Activated CD4-positive, alpha-beta T cell treated with anti-CD3 and anti-CD28 coated beads, Interleukin-2, amount 10 ng/mL, durations not matched to agents 24 days and 14 days (primary cell): ENCODE measurements at regions of chr10 and their contacts with region 1.

Region 1: GRCh38 chr10:30027057-30028005 is 32.1 kb downstream of the JCAD start:
- DNase-seq: peak; percentile 98
- H3K4me3 Mint-ChIP-seq: peak overlapping the region; percentile 83
- H3K27ac Mint-ChIP-seq: peak overlapping the region; percentile 86
- H3K4me1 Mint-ChIP-seq: peaks cover 43% of the 10 kb centered on the region
- H3K27me3 Mint-ChIP-seq: peaks cover 20% of the 10 kb centered on the region

Region 2: GRCh38 chr10:29658984-29659965 is 368.1 kb before region 1 on chr10:
- intact Hi-C with region 1: loop called (anchors 1 kb)
- DNase-seq: peak; percentile 89
- H3K4me3 Mint-ChIP-seq: peak overlapping the region; percentile 56
- H3K27ac Mint-ChIP-seq: peak overlapping the region; percentile 67
- H3K4me1 Mint-ChIP-seq: peaks cover 18% of the 10 kb centered on the region
- H3K27me3 Mint-ChIP-seq: peaks cover 46% of the 10 kb centered on the region

Region 3: DNA sequence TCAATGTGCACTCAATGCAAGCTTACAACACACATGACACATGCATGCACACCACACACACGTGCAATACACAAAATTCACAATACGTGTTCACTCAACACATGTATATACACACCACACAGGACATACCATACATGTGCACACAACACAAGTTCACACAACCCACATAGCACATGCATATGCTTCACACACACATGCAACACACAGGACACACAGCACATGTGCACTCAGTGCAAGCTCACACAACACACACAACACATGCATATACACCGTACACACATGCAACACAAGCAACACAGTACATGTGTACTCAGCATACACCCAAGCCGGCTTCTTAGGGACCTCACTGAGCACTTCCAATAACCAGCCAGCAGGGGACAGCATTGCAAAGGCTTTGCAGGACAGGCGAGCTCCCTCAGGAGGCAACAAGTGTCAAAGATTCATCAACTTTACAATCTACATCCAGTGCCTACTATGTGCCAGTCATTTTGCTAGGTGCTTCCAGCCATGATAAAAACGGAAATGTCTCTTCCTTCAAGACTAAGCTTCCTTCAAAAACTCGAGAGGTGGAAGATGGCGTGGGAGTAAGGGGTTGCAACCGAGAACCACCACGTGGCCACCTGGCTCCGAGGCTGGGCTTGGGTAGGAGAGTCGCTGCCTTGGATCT is 29.1 kb before region 1 on chr10:
- intact Hi-C with region 1: loop called (anchors 1 kb)
- DNase-seq: peak; percentile 94
- H3K4me3 Mint-ChIP-seq: no peak overlapping the region
- H3K27ac Mint-ChIP-seq: peak overlapping the region; percentile 20
- H3K4me1 Mint-ChIP-seq: peaks cover 8% of the 10 kb centered on the region
- H3K27me3 Mint-ChIP-seq: peaks cover 36% of the 10 kb centered on the region

Region 4: GRCh38 chr10:30048768-30049517 is 21.6 kb after region 1 on chr10:
- intact Hi-C with region 1: loop called (anchors 1 kb)
- DNase-seq: peak; percentile 74
- H3K4me3 Mint-ChIP-seq: peak overlapping the region; percentile 63
- H3K27ac Mint-ChIP-seq: peak overlapping the region; percentile 21
- H3K4me1 Mint-ChIP-seq: peaks cover 26% of the 10 kb centered on the region
- H3K27me3 Mint-ChIP-seq: peaks cover 36% of the 10 kb centered on the region

Region 5: DNA sequence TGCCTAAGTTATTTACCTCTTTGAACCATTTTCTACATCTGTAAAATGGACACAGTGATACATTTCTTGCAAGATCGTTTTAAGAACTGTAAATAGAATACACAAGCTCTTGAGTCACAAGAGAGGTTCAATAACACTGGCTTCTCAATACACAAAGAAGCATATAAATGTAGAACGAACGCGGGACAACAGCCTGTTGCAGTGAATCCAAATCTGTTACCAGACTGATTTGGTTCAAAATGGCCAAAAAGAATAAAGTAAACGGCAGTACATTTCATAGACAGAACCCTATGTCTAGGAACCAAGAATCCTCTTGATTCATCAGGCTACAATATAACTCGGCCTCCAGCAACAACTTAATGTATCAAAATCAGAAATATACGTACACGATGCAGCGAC is 321.0 kb after region 1 on chr10:
- intact Hi-C with region 1: loop called (anchors 10 kb)
- DNase-seq: no peak
- H3K4me3 Mint-ChIP-seq: peak overlapping the region; percentile 90
- H3K27ac Mint-ChIP-seq: peak overlapping the region; percentile 93
- H3K4me1 Mint-ChIP-seq: peaks cover 34% of the 10 kb centered on the region
- H3K27me3 Mint-ChIP-seq: peaks cover under 1% of the 10 kb centered on the region